ENCODE measurements at regions of chr10 and their contacts with region 1.

Region 1: DNA sequence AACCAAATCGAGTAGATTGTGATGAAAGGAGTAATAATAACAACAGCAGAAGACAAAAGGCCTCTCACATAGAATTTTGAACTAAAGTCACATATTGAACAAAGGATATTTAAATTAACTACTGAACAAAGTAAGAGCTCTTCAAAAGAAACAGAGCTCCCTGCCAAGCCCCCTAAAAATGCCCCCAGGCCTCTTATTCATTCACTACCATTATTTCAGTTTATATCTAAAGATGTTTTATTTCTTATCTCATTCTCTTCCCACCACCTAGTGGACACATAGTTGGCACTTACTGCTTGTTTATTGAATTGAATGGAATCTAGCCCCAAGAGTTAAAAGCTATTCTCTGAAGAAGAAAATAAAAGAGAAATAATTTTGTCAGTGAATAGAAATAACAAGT is 37.4 kb downstream of the VCL start:
- DNase-seq: peak in 2 of 3 donors; percentile 48 to 57
- H3K4me3 ChIP-seq: no peak overlapping the region
- H3K27ac ChIP-seq: no peak overlapping the region
- H3K4me1 ChIP-seq: peaks cover 17 to 24% (median 19%) of the 10 kb centered on the region in 4 experiments
- H3K27me3 ChIP-seq: no peaks in the 10 kb centered on the region

Region 2: GRCh38 chr10:73495884-73496674 is 539.2 kb before region 1 on chr10 and contains the start of gene PPP3CB:
- CTCF ChIA-PET with region 1: no interaction called
- POLR2A ChIA-PET with region 1: no interaction called
- DNase-seq: peak; percentile 97 to 99 (median 98)
- H3K4me3 ChIP-seq: peak within 1 kb of the TSS; percentile 84 to 97 (median 95)
- H3K27ac ChIP-seq: peak within 1 kb of the TSS; percentile 86 to 95
- H3K4me1 ChIP-seq: peaks cover 17 to 38% (median 25%) of the 10 kb centered on the region in 4 experiments
- H3K27me3 ChIP-seq: no peaks in the 10 kb centered on the region

Region 3: GRCh38 chr10:74021248-74022055 is 13.9 kb before region 1 on chr10:
- CTCF ChIA-PET with region 1: interaction called, 15 read pairs
- POLR2A ChIA-PET with region 1: no interaction called
- DNase-seq: peak; percentile 38 to 82 (median 70)
- H3K4me3 ChIP-seq: peak overlapping the region in 2 of 7 experiments; percentile 45 to 53
- H3K27ac ChIP-seq: peak overlapping the region; percentile 70 to 83
- H3K4me1 ChIP-seq: peaks cover 2 to 19% (median 11%) of the 10 kb centered on the region in 4 experiments
- H3K27me3 ChIP-seq: no peaks in the 10 kb centered on the region

Region 4: DNA sequence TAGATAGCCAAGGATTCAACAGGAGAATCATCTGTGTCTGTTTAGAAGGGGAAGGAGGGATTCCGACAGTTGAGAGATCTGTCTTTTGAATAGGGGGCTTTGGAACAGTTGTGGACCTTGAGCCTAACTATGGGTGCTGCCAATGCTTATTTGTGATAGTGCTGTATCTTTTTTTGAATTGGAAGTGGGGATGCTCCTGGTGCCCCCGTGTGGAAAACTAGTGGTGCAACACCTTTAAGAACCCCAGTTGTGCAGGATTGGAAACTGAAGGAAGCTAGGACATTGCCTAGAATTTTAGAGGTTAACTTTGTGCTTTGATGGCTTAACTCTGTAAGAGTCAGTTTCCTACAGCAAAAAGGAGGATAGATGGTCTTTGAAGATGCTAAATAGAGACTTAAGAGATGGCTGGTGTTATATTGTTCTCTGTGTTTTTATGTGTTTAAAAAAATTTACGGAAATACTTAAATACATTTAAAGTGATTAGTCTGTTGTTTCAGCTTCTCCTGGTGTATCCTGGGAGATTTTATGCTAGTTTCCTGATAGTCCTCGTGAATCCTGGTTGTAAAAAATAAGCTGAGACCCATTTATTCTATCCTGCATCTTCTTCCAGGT is 46.0 kb after region 1 on chr10:
- CTCF ChIA-PET with region 1: interaction called, 13 read pairs
- POLR2A ChIA-PET with region 1: no interaction called
- DNase-seq: peak; percentile 59 to 72 (median 64)
- H3K4me3 ChIP-seq: no peak overlapping the region
- H3K27ac ChIP-seq: no peak overlapping the region
- H3K4me1 ChIP-seq: peaks cover 4 to 32% (median 11%) of the 10 kb centered on the region in 4 experiments
- H3K27me3 ChIP-seq: no peaks in the 10 kb centered on the region